PC-9 (cell line): ENCODE measurements at regions of chr6 and their contacts with region 1.

Region 1: GRCh38 chr6:124223611-124224345 is 420.1 kb downstream of the NKAIN2 start:
- DNase-seq: no peak
- H3K4me3 ChIP-seq: no peak overlapping the region
- H3K27ac ChIP-seq: no peak overlapping the region
- H3K4me1 ChIP-seq: peaks cover 10% of the 10 kb centered on the region
- H3K27me3 ChIP-seq: no peaks in the 10 kb centered on the region
- CTCF ChIP-seq: no peak

Region 2: GRCh38 chr6:125986300-125987025 is 1762.7 kb after region 1 on chr6 and contains the start of gene TRMT11:
- CTCF ChIA-PET with region 1: no interaction called
- POLR2A ChIA-PET with region 1: no interaction called
- intact Hi-C with region 1: loop called (anchors 10 kb)
- DNase-seq: peak; percentile 86 to 93
- H3K4me3 ChIP-seq: peak within 1 kb of the TSS; percentile 69
- H3K27ac ChIP-seq: peak within 1 kb of the TSS; percentile 88
- H3K4me1 ChIP-seq: peaks cover 55% of the 10 kb centered on the region
- H3K27me3 ChIP-seq: no peaks in the 10 kb centered on the region
- CTCF ChIP-seq: no peak
- total RNA-seq, gene TRMT11: 24.2 and 26.0 TPM in 2 replicates